T-cell (primary cell): ENCODE measurements at regions of chr5 and their contacts with region 1.

Region 1: GRCh38 chr5:66987949-66988838 is 208.4 kb downstream of the CD180 start:
- DNase-seq: peak in 1 of 35 experiments; percentile 48
- ATAC-seq: peak; percentile 58 to 66 (median 62)
- H3K4me3 ChIP-seq: no peak overlapping the region
- H3K4me3 Mint-ChIP-seq: no peak overlapping the region
- H3K27ac ChIP-seq: no peak overlapping the region
- H3K27ac Mint-ChIP-seq: no peak overlapping the region
- H3K4me1 ChIP-seq: no peaks in the 10 kb centered on the region
- H3K4me1 Mint-ChIP-seq: peaks cover 0 to 4% (median 2%) of the 10 kb centered on the region in 3 donors
- H3K27me3 ChIP-seq: no peaks in the 10 kb centered on the region
- H3K27me3 Mint-ChIP-seq: no peaks in the 10 kb centered on the region

Region 2: GRCh38 chr5:67003935-67004729 is 15.9 kb after region 1 on chr5:
- CTCF ChIA-PET with region 1: interaction called, 3 to 12 read pairs
- POLR2A ChIA-PET with region 1: no interaction called
- DNase-seq: peak; percentile 73 to 91 (median 85)
- ATAC-seq: peak; percentile 84 to 87 (median 86)
- H3K4me3 ChIP-seq: peak overlapping the region; percentile 72 to 85
- H3K4me3 Mint-ChIP-seq: peak overlapping the region; percentile 91 to 98 (median 94)
- H3K27ac ChIP-seq: peak overlapping the region; percentile 81
- H3K27ac Mint-ChIP-seq: peak overlapping the region; percentile 94 to 97
- H3K4me1 ChIP-seq: peaks cover 17 to 18% of the 10 kb centered on the region in 2 experiments
- H3K4me1 Mint-ChIP-seq: peaks cover 48 to 55% (median 55%) of the 10 kb centered on the region in 3 donors
- H3K27me3 ChIP-seq: no peaks in the 10 kb centered on the region
- H3K27me3 Mint-ChIP-seq: no peaks in the 10 kb centered on the region

Region 3: DNA sequence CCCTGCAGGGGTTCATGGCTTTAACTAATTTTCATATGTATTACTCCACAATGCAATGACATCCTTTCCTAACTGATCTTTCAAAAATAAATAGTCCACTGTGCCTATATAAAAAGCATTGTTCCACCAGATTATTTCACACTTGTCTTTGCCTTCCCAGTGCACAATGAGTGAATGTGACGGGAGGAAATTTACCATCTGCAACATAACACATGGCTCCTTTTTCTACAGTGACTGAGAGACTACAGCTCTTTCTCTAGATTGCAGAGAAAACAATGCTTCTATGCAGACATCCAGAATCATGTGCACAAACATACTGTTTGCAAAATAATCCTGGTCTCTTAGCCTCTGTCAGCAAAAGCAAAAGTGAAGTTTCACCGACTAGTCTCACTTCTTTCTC is 743.7 kb after region 1 on chr5:
- CTCF ChIA-PET with region 1: no interaction called
- POLR2A ChIA-PET with region 1: no interaction called
- DNase-seq: no peak
- ATAC-seq: no peak
- H3K4me3 ChIP-seq: no peak overlapping the region
- H3K4me3 Mint-ChIP-seq: no peak overlapping the region
- H3K27ac ChIP-seq: no peak overlapping the region
- H3K27ac Mint-ChIP-seq: no peak overlapping the region
- H3K4me1 ChIP-seq: no peaks in the 10 kb centered on the region
- H3K4me1 Mint-ChIP-seq: peaks cover 0 to 12% (median 3%) of the 10 kb centered on the region in 3 donors
- H3K27me3 ChIP-seq: no peaks in the 10 kb centered on the region
- H3K27me3 Mint-ChIP-seq: peaks cover 15 to 22% of the 10 kb centered on the region in 2 donors